ENCODE measurements at regions of chr6 and their contacts with region 1.

Region 1: DNA sequence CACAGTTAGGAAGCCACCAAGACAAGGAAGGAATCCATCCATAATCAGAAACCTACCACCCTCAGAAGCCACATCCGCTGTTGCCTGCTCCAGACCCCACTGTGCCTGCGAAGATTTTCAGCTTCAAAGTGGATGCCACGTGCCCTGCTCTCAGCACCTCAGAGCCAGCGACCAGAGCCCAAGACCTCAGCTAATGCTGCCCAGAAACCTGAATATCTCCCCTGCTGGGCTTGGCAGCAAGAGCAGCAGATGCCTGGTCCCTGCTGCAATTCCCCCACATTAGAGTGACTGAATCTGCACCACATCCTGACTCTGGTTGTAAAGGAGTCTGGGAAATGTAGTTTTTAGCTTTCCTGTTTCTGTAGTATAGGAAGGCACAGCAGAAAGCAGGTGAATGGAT is 10.7 kb upstream of the ULBP3 start:
- DNase-seq: no peak
- H3K4me3 ChIP-seq: no peak overlapping the region
- H3K4me3 Mint-ChIP-seq: no peak overlapping the region
- H3K27ac ChIP-seq: no peak overlapping the region
- H3K27ac Mint-ChIP-seq: no peak overlapping the region
- H3K4me1 ChIP-seq: no peaks in the 10 kb centered on the region
- H3K4me1 Mint-ChIP-seq: no peaks in the 10 kb centered on the region
- H3K27me3 ChIP-seq: peaks cover 3 to 5% of the 10 kb centered on the region in 2 donors
- H3K27me3 Mint-ChIP-seq: peaks cover 8 to 26% (median 23%) of the 10 kb centered on the region in 3 donors
- CTCF ChIP-seq: no peak

Region 2: GRCh38 chr6:150334790-150335783 is 255.5 kb after region 1 on chr6:
- intact Hi-C with region 1: loop called (anchors 5 kb)
- DNase-seq: peak; percentile 5 to 37 (median 14)
- H3K4me3 ChIP-seq: no peak overlapping the region
- H3K4me3 Mint-ChIP-seq: no peak overlapping the region
- H3K27ac ChIP-seq: no peak overlapping the region
- H3K27ac Mint-ChIP-seq: peak overlapping the region in 1 of 7 donors; percentile 59
- H3K4me1 ChIP-seq: no peaks in the 10 kb centered on the region
- H3K4me1 Mint-ChIP-seq: no peaks in the 10 kb centered on the region
- H3K27me3 ChIP-seq: no peaks in the 10 kb centered on the region
- H3K27me3 Mint-ChIP-seq: peaks cover 2 to 8% (median 5%) of the 10 kb centered on the region in 3 donors
- CTCF ChIP-seq: peak; percentile 68

Region 3: GRCh38 chr6:150395398-150396009 is 315.9 kb after region 1 on chr6:
- intact Hi-C with region 1: loop called (anchors 10 kb)
- DNase-seq: peak in 2 of 3 donors; percentile 5 to 23
- H3K4me3 ChIP-seq: no peak overlapping the region
- H3K4me3 Mint-ChIP-seq: peak overlapping the region in 1 of 2 donors; percentile 54
- H3K27ac ChIP-seq: no peak overlapping the region
- H3K27ac Mint-ChIP-seq: no peak overlapping the region
- H3K4me1 ChIP-seq: no peaks in the 10 kb centered on the region
- H3K4me1 Mint-ChIP-seq: no peaks in the 10 kb centered on the region
- H3K27me3 ChIP-seq: peaks cover 0 to 2% of the 10 kb centered on the region in 2 donors
- H3K27me3 Mint-ChIP-seq: peaks cover 7 to 10% (median 9%) of the 10 kb centered on the region in 3 donors
- CTCF ChIP-seq: peak; percentile 72

Region 4: DNA sequence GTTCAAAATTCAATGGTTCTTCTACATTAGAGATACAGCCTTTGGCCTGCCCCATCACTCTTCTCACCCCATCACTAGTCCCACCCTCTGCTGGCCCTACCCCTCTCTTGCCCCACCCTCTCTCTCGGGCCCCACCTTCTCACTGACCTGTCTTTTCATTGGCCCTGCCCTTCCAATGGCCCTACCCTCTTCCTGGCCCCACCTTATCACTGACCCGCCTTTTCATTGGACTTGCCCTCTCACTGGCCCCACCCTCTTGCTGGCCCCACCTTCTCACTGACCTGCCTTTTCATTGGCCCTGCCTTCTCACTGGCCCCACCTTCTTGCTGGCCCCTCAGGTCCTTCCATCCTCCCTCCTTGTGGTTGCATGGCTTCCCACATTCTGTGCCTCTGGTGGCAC is 412.9 kb after region 1 on chr6:
- intact Hi-C with region 1: no loop called
- DNase-seq: no peak
- H3K4me3 ChIP-seq: no peak overlapping the region
- H3K4me3 Mint-ChIP-seq: no peak overlapping the region
- H3K27ac ChIP-seq: no peak overlapping the region
- H3K27ac Mint-ChIP-seq: no peak overlapping the region
- H3K4me1 ChIP-seq: no peaks in the 10 kb centered on the region
- H3K4me1 Mint-ChIP-seq: no peaks in the 10 kb centered on the region
- H3K27me3 ChIP-seq: no peaks in the 10 kb centered on the region
- H3K27me3 Mint-ChIP-seq: peaks cover 0 to 2% (median 2%) of the 10 kb centered on the region in 3 donors
- CTCF ChIP-seq: no peak

Measured in CD14-positive monocyte (primary cell).